Naive thymus-derived CD8-positive, alpha-beta T cell (primary cell): ENCODE measurements at regions of chr1 and their contacts with region 1.

Region 1: DNA sequence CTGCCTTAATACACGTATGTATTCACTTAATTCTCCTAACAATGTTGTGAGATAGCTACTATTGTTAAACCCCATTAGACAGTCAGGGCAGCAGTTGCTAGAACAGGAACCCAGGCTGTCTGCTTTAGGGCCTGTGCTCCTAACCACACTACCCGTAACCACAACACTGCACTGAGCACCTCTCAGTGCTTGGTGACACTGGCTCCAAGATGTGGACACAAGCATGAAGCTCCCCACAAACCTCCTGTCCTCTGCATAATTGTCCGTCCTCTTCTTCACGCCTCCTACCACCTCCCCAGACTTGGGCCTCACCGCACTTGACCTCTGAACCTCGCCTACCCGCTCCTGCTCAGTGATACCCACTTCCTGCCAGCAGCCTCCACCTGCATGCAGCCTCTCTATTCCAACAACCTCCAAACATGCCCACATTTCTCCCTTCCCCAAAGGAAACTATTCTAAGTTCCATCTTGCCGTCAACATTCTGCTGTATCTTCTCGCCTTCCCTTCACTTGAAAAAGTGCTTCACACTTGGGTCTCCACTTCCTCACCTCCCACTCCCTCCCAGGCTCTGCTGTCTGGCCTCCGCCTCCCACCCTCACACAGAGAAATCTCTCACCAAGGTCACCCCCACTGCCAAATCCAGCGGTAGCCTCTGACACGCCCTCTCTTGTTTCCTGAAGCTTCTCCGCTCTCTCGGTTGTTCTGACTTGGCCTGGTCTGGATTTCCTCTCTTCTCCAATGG is 14.6 kb upstream of the AHDC1 start:
- DNase-seq: peak in 5 of 10 donors; percentile 34 to 68 (median 63)
- ATAC-seq: peak; percentile 98 to 99
- H3K4me3 Mint-ChIP-seq: peak overlapping the region in 9 of 10 donors; percentile 46 to 79 (median 62)
- H3K27ac Mint-ChIP-seq: peak overlapping the region; percentile 68 to 94 (median 89)
- H3K4me1 Mint-ChIP-seq: peaks cover 35 to 69% (median 65%) of the 10 kb centered on the region in 4 donors
- H3K27me3 Mint-ChIP-seq: no peaks in the 10 kb centered on the region

Region 2: DNA sequence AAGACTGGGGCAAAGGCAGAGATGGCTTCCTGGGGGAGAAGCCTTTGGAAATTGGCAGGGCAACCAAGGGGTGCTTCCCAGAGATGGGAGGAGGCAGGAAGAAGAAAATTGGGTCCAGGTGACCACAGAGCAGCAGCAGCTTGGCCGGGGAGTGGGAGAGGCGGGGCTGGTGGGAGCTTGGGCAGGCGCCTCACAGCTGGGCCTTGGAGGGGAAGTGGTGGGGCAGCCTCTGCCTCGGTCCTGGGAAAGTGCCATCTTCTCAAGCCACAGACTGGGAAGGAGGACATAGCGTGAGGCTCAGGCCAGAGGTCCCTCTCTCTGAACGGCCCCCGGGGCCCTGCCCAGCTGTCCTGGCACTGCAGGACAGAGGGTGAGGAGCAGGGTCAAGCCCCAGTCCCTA is 104.6 kb before region 1 on chr1:
- POLR2A ChIA-PET with region 1: no interaction called
- DNase-seq: no peak
- ATAC-seq: no peak
- H3K4me3 Mint-ChIP-seq: no peak overlapping the region
- H3K27ac Mint-ChIP-seq: peak overlapping the region in 1 of 10 donors; percentile 34
- H3K4me1 Mint-ChIP-seq: peaks cover 13 to 24% (median 20%) of the 10 kb centered on the region in 4 donors
- H3K27me3 Mint-ChIP-seq: no peaks in the 10 kb centered on the region

Region 3: DNA sequence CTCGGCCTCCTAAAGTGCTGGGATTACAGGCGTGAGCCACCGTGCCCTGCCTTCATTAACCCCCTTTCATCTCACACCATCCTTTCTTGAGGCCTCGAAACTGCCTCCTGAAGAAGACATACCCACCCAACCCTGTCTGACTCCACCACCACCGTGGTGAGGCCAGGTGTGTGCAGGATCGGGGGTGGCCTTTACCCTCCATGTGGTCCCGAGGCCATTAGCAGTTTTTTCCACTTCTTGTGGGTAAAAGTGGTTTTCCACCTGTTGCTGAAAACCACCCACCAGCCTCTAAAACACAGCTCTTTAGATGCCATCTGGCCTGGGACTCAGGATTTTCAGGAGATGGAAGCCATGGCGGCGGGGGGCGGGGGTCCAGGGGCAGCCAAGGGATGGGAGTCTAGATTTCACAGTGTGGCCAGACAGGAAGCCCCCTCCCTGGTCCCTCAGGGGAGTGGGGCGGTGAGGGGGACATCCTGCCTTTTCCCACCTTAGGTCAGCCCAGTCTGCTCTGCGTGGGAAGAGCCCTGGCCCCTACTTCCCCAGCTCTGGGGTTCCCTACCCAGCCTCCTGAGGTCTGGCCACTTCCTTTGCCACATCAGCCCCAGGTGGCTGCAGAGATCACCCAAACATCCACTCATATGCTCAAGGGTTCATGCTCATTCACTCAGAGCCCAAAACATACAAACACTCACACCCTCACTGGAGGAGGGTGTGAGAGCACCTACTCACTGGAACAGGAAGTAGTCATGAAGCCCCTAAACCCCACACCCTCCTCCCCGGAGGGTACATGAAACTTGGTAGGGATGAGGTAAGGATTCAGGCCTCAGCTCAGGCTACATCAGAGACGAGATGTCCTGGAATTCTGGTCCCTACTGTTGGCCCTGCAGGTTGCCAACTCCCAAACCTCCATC is 14.1 kb after region 1 on chr1:
- POLR2A ChIA-PET with region 1: interaction called, 25 read pairs
- DNase-seq: no peak
- ATAC-seq: peak; percentile 45 to 66
- H3K4me3 Mint-ChIP-seq: peak overlapping the region; percentile 57 to 85 (median 76)
- H3K27ac Mint-ChIP-seq: peak overlapping the region; percentile 23 to 92 (median 85)
- H3K4me1 Mint-ChIP-seq: peaks cover 41 to 81% (median 75%) of the 10 kb centered on the region in 4 donors
- H3K27me3 Mint-ChIP-seq: no peaks in the 10 kb centered on the region